Activated CD8-positive, alpha-beta T cell treated with anti-CD3 and anti-CD28 coated beads for 36 hours (primary cell): ENCODE measurements at regions of chr6 and their contacts with region 1.

Region 1: GRCh38 chr6:46129629-46130511 is at the start of gene ENPP4:
- DNase-seq: peak; percentile 88
- ATAC-seq: peak; percentile 100
- H3K4me3 Mint-ChIP-seq: peak within 1 kb of the TSS; percentile 92
- H3K27ac Mint-ChIP-seq: peak within 1 kb of the TSS; percentile 92
- H3K4me1 Mint-ChIP-seq: peaks cover 35% of the 10 kb centered on the region
- H3K27me3 Mint-ChIP-seq: no peaks in the 10 kb centered on the region
- CTCF ChIP-seq: no peak
- total RNA-seq, gene ENPP4: 6.6 to 7.3 TPM

Region 2: DNA sequence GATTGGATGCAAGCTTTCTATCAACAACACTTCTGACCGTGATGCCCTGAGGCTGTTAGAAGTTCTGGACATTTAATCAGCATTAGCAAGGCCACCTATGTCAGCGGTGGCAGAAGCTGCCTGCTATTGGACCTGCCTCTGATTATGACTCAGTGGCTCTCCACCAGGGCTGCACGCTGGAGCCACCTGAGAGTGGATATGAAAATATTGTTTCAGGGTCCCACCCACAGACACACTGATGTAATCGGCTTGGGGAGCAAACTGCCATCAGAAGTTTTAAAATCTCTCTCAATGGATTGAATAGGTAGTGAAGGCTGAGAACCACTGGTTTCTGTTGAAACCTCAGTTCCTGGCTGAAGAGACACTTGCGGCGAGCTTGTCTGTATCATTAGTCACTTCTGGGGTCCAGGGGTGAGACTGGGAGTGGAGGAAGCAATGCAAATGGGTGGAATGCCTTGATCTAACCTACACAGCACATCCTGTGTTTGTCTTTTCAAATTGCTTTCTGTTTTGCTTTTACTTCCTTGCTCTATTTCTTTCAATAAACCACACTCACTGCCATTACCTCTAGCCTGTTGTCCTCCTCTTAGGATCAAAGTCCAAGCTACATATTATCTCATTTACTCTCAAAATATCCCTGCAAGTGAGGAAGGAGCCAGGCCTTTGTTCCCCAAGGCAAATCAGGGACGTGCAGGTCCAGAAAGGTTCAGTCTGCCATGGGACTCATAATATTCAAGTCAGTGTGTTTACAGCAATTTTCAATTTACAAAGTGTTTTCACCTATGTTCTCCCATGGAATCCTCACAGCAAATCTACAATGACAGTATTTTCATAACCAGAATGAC is 118.4 kb before region 1 on chr6:
- CTCF ChIA-PET with region 1: no interaction called
- POLR2A ChIA-PET with region 1: no interaction called
- intact Hi-C with region 1: no loop called
- DNase-seq: peak; percentile 86
- ATAC-seq: peak; percentile 91
- H3K4me3 Mint-ChIP-seq: peak overlapping the region; percentile 53
- H3K27ac Mint-ChIP-seq: peak overlapping the region; percentile 91
- H3K4me1 Mint-ChIP-seq: peaks cover 54% of the 10 kb centered on the region
- H3K27me3 Mint-ChIP-seq: peaks cover 1% of the 10 kb centered on the region
- CTCF ChIP-seq: no peak

Region 3: DNA sequence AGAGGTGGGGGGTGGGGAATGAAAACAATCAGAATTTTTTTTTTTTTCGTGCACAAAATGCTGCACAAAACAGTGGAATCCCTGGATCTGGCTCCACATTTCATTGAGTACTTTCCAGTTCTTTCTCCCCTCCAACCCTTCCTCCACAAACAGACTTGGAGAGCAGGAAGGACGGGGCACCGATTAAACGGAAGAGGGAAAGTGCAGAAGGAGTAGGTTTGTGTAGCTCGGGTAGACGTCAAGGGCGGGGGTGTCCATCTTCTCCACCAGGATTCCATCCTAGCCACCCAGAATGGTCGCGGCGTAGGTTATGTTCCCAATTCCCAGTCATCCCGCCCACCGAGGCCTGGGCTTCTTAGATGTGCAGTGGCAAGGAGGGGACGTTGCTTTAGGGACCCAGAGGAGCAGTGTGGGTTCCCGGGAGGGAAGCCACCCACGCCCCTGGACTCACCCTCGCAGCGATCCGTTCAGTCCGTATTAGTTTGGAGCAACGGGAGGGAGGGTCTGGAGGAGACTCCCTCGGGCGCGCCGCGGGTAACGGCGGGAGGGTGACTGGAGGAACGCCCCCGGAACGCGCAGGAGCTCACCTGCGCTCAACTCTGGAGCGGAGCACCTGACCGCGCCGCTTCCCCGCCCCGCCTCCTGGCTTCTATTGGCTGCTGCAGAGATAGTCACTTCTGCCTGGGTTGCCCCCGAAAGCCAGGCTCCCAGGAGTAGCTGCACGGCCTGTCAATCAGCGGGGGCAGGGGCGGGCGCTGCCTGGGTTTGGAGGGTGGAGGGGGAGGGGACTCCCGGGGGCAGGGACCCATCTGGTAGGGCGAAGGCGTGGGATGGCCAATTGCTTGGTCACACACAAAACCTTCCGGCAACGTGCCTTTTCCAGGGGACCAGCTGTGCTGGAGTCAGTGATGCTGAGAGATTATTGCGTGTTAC is 40.8 kb after region 1 on chr6 and contains the start of gene ENPP5:
- CTCF ChIA-PET with region 1: no interaction called
- POLR2A ChIA-PET with region 1: no interaction called
- intact Hi-C with region 1: loop called (anchors 2 kb)
- DNase-seq: peak; percentile 88
- ATAC-seq: peak; percentile 95
- H3K4me3 Mint-ChIP-seq: peak within 1 kb of the TSS; percentile 83
- H3K27ac Mint-ChIP-seq: no peak within 1 kb of the TSS
- H3K4me1 Mint-ChIP-seq: peaks cover 21% of the 10 kb centered on the region
- H3K27me3 Mint-ChIP-seq: peaks cover 10% of the 10 kb centered on the region
- CTCF ChIP-seq: no peak
- total RNA-seq, gene ENPP5: 0.40 to 0.68 TPM